ENCODE measurements at regions of chr3 and their contacts with region 1.

Region 1: DNA sequence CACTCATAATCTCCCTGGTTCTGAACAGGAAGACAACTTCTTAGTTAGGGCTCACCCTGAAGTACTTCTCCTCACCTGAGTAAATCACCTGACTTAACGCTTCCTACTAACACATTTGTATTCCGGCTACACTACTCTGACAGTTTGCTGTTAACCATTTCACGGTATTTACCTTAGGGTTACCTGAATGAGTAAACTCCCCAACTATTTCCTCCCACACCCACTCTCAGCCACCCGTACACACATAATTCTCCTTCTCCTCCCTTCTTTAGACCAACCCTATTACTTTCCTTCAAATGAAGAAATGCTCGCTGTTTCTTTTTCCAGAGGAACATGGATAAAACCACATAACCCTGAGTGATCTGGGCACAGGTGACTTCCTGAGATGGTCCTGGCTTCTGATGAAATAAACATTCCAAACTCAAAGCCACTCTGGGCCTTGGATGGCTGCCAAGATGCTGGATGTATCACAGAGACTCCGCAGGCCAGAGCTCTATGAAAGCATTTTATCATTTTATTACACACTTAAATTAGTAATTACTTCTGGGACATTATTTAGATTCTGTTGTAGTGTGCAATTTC is 183.6 kb upstream of the ATP11B start:
- DNase-seq: peak; percentile 78 to 98
- H3K4me3 ChIP-seq: peak overlapping the region; percentile 2; the same call in 1 of the 2 replicates
- H3K27ac ChIP-seq: peak overlapping the region; percentile 80
- H3K4me1 ChIP-seq: peaks cover 39% of the 10 kb centered on the region
- H3K27me3 ChIP-seq: no peaks in the 10 kb centered on the region
- CTCF ChIP-seq: no peak

Region 2: GRCh38 chr3:182533394-182533793 is 76.3 kb before region 1 on chr3:
- CTCF ChIA-PET with region 1: no interaction called
- POLR2A ChIA-PET with region 1: no interaction called
- intact Hi-C with region 1: loop called (anchors 5 kb)
- DNase-seq: peak in 1 of 2 experiments; percentile 44
- H3K4me3 ChIP-seq: no peak overlapping the region
- H3K27ac ChIP-seq: no peak overlapping the region
- H3K4me1 ChIP-seq: peaks cover 11% of the 10 kb centered on the region
- H3K27me3 ChIP-seq: no peaks in the 10 kb centered on the region
- CTCF ChIP-seq: no peak

Region 3: DNA sequence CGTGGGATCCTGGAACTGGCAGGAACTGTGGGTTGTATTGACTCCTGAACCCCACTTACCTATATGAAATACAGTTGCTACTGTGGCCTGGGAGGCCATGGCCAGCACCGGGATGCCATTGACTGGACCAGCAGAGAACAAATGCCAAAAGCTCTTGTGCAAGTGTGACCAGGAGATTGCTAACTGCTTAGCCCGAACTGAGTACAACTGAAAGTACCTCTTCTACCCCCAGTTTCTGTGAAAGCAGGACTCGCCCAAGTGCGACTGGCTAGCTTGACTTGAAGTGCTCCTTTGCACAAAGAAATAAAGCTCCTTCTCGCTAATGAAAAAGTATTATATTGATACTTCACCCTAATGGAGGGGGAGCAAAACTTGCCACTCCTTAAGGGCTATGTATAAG is 82.4 kb after region 1 on chr3:
- CTCF ChIA-PET with region 1: no interaction called
- POLR2A ChIA-PET with region 1: no interaction called
- intact Hi-C with region 1: no loop called
- DNase-seq: no peak
- H3K4me3 ChIP-seq: no peak overlapping the region
- H3K27ac ChIP-seq: no peak overlapping the region
- H3K4me1 ChIP-seq: no peaks in the 10 kb centered on the region
- H3K27me3 ChIP-seq: no peaks in the 10 kb centered on the region
- CTCF ChIP-seq: no peak